Activated CD8-positive, alpha-beta T cell treated with anti-CD3 and anti-CD28 coated beads for 36 hours (primary cell): ENCODE measurements at regions of chr17 and their contacts with region 1.

Region 1: GRCh38 chr17:38982858-38983746 is 15.9 kb upstream of the FBXO47 start:
- DNase-seq: peak; percentile 68
- ATAC-seq: peak; percentile 78
- H3K4me3 Mint-ChIP-seq: no peak overlapping the region
- H3K27ac Mint-ChIP-seq: no peak overlapping the region
- H3K4me1 Mint-ChIP-seq: no peaks in the 10 kb centered on the region
- H3K27me3 Mint-ChIP-seq: no peaks in the 10 kb centered on the region
- CTCF ChIP-seq: peak; percentile 91

Region 2: DNA sequence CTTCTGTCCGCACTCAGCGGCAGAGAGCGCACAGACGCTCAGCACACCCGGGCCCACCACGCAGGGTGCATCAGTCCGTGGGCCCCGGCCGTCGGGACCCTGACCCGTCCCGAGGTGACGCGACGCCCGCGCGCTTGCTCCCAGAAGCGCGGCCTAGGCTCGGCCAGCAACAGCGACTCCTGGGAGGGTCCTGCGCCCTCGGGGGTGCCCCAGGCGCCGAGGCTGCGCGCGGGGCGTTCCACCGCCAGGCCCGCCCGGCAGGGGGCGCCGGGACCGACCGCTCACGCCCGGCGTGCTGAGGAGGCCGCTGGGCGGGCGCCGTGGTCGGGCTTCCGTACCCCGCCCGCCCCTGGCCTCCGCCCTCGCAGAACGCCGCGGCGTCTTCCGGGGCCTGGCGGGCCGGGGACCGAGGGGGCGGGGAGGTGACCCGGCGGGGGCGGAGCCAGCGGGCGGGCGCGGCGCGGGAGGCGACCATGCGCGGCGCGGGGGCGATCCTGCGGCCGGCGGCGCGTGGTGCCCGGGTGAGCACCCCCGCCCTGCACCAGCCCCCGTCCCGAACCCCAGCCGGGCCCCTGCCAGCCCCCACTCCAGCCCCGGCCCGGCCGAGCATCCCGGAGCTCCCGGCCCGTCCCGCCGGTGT is 253.1 kb before region 1 on chr17 and contains the start of gene CISD3:
- CTCF ChIA-PET with region 1: no interaction called
- POLR2A ChIA-PET with region 1: no interaction called
- intact Hi-C with region 1: no loop called
- DNase-seq: peak; percentile 86
- ATAC-seq: peak; percentile 70
- H3K4me3 Mint-ChIP-seq: peak within 1 kb of the TSS; percentile 89
- H3K27ac Mint-ChIP-seq: peak within 1 kb of the TSS; percentile 99
- H3K4me1 Mint-ChIP-seq: peaks cover 80% of the 10 kb centered on the region
- H3K27me3 Mint-ChIP-seq: no peaks in the 10 kb centered on the region
- CTCF ChIP-seq: peak; percentile 59
- total RNA-seq, gene CISD3: 43.2 to 44.2 TPM

Region 3: GRCh38 chr17:38809828-38810227 is 173.3 kb before region 1 on chr17:
- CTCF ChIA-PET with region 1: no interaction called
- POLR2A ChIA-PET with region 1: no interaction called
- intact Hi-C with region 1: no loop called
- DNase-seq: no peak
- ATAC-seq: no peak
- H3K4me3 Mint-ChIP-seq: no peak overlapping the region
- H3K27ac Mint-ChIP-seq: no peak overlapping the region
- H3K4me1 Mint-ChIP-seq: no peaks in the 10 kb centered on the region
- H3K27me3 Mint-ChIP-seq: no peaks in the 10 kb centered on the region
- CTCF ChIP-seq: no peak

Region 4: GRCh38 chr17:38922538-38923297 is 60.4 kb before region 1 on chr17:
- CTCF ChIA-PET with region 1: interaction called, 39 read pairs
- POLR2A ChIA-PET with region 1: no interaction called
- intact Hi-C with region 1: no loop called
- DNase-seq: no peak
- ATAC-seq: no peak
- H3K4me3 Mint-ChIP-seq: no peak overlapping the region
- H3K27ac Mint-ChIP-seq: peak overlapping the region; percentile 62
- H3K4me1 Mint-ChIP-seq: peaks cover 53% of the 10 kb centered on the region
- H3K27me3 Mint-ChIP-seq: no peaks in the 10 kb centered on the region
- CTCF ChIP-seq: no peak

Region 5: DNA sequence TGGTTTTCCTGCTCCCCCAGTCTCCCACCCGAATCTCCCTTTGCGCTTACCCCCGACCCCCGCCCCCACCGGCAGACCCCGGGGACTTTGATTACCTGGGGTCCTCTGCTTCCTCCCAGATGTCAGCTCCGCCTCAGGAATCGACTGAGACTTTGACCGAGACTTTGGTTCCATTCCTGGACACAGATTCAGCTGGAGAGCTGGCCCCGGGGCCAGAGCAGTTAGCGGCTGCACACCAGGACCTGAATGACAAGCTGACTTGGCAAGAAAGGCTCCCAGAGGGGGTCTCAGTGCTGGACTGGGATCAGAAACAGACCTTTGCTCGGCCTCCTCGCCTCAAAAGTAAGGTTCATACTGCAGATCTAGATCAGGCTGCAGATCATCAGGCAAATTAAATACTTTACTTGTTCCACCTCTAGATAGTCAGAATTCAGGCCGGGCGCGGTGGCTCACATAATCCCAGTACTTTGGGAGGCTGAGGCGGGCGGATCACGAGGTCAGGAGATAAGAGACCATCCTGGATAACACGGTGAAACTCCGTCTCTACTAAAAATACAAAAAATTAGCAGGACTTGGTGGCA is 44.4 kb after region 1 on chr17:
- CTCF ChIA-PET with region 1: interaction called, 11 read pairs
- POLR2A ChIA-PET with region 1: interaction called, 4 read pairs
- intact Hi-C with region 1: no loop called
- DNase-seq: no peak
- ATAC-seq: no peak
- H3K4me3 Mint-ChIP-seq: peak overlapping the region; percentile 39
- H3K27ac Mint-ChIP-seq: no peak overlapping the region
- H3K4me1 Mint-ChIP-seq: peaks cover 11% of the 10 kb centered on the region
- H3K27me3 Mint-ChIP-seq: peaks cover 12% of the 10 kb centered on the region
- CTCF ChIP-seq: no peak

Region 6: DNA sequence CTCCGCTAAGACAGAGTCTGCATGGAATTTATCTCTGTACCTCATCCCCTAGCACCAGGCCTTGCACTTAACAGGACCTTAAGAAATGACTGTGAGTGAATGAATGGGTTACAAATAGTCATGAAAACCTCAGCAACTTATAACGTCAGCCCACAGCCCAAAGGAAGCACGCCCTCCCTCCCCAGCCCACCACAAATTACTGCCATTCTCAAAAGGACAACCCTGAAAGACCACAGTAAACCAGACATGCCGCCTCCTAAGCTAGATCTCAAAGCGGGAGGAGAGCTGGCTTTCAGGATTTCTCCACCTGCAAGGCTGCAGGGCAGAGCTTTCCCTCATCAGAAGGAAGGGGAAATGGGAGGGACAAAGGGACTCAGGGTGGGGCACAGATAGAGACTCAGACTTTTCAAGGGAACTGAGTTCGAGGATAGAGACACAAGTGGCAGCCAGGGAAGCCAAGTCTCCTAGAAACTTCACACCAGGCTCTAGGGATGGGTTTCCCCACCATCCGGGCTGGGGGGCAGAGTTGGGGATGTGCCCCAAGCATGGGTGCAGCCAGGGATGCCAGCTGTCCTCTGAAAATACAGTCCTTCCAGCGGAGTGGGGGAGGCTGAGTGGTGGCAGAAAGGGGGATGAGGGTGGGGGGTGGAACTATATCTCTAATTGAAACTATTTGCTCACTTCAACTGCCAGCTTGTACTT is 111.7 kb after region 1 on chr17:
- CTCF ChIA-PET with region 1: interaction called, 12 read pairs
- POLR2A ChIA-PET with region 1: no interaction called
- intact Hi-C with region 1: no loop called
- DNase-seq: peak; percentile 79
- ATAC-seq: peak; percentile 66
- H3K4me3 Mint-ChIP-seq: peak overlapping the region; percentile 33
- H3K27ac Mint-ChIP-seq: peak overlapping the region; percentile 86
- H3K4me1 Mint-ChIP-seq: peaks cover 73% of the 10 kb centered on the region
- H3K27me3 Mint-ChIP-seq: no peaks in the 10 kb centered on the region
- CTCF ChIP-seq: no peak

Region 7: GRCh38 chr17:39164675-39165143 is 181.6 kb after region 1 on chr17:
- CTCF ChIA-PET with region 1: interaction called, 72 read pairs
- POLR2A ChIA-PET with region 1: no interaction called
- intact Hi-C with region 1: no loop called
- DNase-seq: peak; percentile 90
- ATAC-seq: peak; percentile 97
- H3K4me3 Mint-ChIP-seq: peak overlapping the region; percentile 79
- H3K27ac Mint-ChIP-seq: peak overlapping the region; percentile 55
- H3K4me1 Mint-ChIP-seq: peaks cover 14% of the 10 kb centered on the region
- H3K27me3 Mint-ChIP-seq: peaks cover 12% of the 10 kb centered on the region
- CTCF ChIP-seq: peak; percentile 91

Region 8: GRCh38 chr17:39244600-39245570 is 261.8 kb after region 1 on chr17:
- CTCF ChIA-PET with region 1: interaction called, 27 read pairs
- POLR2A ChIA-PET with region 1: no interaction called
- intact Hi-C with region 1: no loop called
- DNase-seq: peak; percentile 96
- ATAC-seq: peak; percentile 96
- H3K4me3 Mint-ChIP-seq: no peak overlapping the region
- H3K27ac Mint-ChIP-seq: no peak overlapping the region
- H3K4me1 Mint-ChIP-seq: peaks cover 13% of the 10 kb centered on the region
- H3K27me3 Mint-ChIP-seq: no peaks in the 10 kb centered on the region
- CTCF ChIP-seq: peak; percentile 97